PC-3 (cell line): ENCODE measurements at regions of chr14 and their contacts with region 1.

Region 1: DNA sequence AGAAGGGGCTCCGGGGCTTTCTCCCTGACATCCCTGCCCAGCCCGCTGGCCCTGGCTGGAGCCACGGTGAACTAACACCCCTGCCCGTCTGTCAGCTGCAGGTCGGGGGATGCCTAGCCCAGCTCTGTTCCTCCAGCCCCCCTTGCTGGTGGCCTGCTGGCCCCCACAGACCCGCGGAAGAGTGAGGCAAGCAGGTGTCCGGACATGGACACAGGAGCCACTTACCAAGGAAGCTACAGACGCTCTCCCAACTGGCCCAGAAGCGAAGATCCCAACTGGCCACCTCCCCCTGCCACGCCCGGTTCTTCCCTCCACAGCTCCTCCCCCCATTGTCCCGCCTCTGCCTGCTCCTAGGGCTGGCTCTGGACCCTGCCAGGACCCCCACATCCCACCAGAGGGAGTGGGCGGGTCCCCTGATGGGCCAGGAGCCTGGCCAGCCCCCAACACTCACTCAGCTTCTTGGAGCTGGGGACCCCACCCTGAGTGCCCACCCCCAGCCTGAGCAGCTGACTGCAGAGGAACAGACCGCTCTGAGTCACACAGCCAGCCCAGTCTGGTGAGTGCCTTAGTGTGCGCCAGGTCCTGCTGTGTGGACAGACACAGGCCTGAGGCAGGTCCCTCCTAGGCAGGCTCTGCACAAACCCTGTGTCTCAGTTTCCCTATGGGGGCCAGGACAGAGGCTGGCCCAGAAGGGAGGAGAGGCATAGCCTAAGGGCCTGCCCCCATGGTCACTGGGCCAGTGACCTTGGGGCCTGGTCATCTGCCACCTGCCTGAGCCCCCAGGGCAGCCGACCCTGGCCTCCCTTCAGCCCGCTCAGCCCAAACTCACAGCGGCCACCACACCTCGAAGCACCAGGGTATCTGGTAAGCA is 7.7 kb downstream of the AHNAK2 start:
- DNase-seq: peak; percentile 86
- ATAC-seq: peak; percentile 17
- H3K4me3 ChIP-seq: peak overlapping the region; percentile 47; the same call in 1 of the 2 replicates
- H3K27ac ChIP-seq: peak overlapping the region; percentile 73
- H3K4me1 ChIP-seq: peaks cover 85% of the 10 kb centered on the region
- H3K27me3 ChIP-seq: no peaks in the 10 kb centered on the region
- CTCF ChIP-seq: no peak

Region 2: DNA sequence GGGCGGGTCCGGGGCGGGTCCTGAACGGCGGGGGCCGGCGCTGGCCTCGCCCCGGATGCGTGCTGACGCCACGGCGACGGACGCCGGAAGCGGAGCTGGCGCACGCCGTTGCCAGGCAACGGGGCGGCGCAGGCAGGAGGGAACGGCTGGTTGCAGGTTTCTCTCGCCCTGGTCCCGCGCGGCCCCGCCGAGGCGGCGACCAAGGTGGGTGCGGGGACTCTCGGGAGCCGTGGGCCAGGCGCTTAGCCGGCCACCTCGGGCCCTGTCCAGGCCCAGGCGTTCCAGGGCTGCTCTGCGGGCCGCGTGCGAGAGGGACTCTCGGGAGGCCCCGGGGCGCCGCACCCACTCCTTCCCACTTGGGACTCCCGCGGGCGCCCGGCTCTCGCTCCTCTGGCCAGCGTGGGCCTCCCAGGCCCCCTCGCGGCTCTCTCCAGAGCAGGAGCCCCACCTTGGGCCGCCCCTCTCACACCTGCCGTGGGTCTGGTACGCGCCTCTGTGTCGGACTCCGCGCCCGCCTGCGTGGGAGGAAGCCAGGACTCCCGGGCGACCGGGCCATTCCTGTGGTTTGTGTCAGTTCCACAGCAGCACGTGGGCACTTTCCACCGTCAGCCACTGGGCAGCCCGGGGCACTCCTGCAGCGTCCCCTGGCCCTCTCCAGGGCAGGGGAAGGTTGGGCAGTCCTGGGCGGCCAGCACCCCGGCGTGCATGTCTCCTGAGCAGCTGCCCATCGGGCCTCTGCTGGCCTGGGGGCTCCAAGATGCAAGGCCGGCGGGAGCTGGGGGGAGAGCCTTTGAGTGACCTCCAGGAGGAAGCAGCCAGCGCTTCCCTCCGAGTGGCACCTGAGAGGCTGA is 15.4 kb after region 1 on chr14 and contains the start of gene CLBA1:
- CTCF ChIA-PET with region 1: interaction called, 4 read pairs
- POLR2A ChIA-PET with region 1: interaction called, 11 read pairs
- intact Hi-C with region 1: no loop called
- DNase-seq: peak; percentile 95
- ATAC-seq: peak; percentile 90
- H3K4me3 ChIP-seq: peak within 1 kb of the TSS; percentile 93
- H3K27ac ChIP-seq: peak within 1 kb of the TSS; percentile 68
- H3K4me1 ChIP-seq: peaks cover 13% of the 10 kb centered on the region
- H3K27me3 ChIP-seq: no peaks in the 10 kb centered on the region
- CTCF ChIP-seq: no peak
- total RNA-seq, gene CLBA1: 19.2 and 27.5 TPM in 2 replicates